OCI-LY7 (cell line): ENCODE measurements at regions of chr2 and their contacts with region 1.

Region 1: DNA sequence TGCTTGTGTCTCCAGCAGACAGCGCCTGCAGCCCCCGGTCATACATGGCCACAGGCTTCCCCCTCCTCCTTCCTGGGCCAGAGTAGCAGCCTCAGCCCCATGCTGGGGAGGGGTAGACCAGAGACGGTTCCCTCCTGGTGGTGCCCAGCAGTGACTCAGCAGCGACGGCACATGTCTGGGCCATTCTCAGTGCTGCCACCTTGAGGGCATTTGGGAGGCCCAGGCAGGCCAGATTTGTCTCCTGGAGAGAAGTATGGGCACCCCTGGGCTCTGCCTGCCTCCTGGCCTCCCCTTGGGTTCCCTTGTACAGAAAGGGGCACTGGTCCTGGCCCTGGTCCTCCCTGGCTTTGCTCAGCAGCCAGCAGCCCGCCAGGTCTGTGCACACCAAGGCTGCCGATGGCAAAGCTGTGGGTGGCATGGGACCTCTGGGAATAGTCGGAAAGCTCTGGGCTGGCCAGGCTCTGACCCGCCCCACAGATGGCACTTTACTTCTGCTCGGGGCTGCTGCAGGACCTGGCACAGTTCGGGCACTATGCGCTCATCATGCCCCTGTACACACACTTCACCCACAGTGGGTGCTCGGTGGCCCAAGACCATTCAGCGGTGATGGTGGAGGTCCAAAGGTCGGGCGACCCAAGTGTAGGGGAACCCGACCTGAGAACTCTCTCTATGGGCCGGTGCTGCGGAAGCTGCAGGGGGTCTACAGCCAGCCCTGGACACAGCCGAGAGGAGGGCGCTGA is 11.4 kb upstream of the ALPI start:
- DNase-seq: peak; percentile 78
- H3K4me3 ChIP-seq: no peak overlapping the region
- H3K27ac ChIP-seq: no peak overlapping the region
- H3K4me1 ChIP-seq: peaks cover 4% of the 10 kb centered on the region
- CTCF ChIP-seq: peak; percentile 80

Region 2: DNA sequence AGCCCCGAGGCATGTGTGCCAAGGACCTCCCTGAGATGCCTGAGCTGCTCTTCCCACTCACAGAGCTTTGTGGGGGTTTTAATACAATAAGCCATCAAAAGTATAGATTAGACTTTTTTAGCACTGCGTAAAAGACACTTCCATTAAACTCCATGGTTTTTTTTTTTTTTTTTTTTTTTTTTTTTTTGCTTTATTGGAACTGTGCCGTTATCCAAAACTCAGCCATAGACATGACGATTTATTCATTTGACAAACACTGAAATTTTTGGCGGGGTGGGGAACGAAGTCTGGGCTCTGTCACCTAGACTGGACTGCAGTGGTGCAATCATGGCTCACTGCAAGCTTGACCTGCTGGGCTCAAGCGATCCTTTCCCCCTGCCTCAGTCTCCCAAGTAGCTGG is 536.8 kb before region 1 on chr2:
- CTCF ChIA-PET with region 1: no interaction called
- POLR2A ChIA-PET with region 1: no interaction called
- intact Hi-C with region 1: loop called (anchors 2 kb)
- DNase-seq: no peak
- H3K4me3 ChIP-seq: no peak overlapping the region
- H3K27ac ChIP-seq: no peak overlapping the region
- H3K4me1 ChIP-seq: no peaks in the 10 kb centered on the region
- CTCF ChIP-seq: no peak

Region 3: DNA sequence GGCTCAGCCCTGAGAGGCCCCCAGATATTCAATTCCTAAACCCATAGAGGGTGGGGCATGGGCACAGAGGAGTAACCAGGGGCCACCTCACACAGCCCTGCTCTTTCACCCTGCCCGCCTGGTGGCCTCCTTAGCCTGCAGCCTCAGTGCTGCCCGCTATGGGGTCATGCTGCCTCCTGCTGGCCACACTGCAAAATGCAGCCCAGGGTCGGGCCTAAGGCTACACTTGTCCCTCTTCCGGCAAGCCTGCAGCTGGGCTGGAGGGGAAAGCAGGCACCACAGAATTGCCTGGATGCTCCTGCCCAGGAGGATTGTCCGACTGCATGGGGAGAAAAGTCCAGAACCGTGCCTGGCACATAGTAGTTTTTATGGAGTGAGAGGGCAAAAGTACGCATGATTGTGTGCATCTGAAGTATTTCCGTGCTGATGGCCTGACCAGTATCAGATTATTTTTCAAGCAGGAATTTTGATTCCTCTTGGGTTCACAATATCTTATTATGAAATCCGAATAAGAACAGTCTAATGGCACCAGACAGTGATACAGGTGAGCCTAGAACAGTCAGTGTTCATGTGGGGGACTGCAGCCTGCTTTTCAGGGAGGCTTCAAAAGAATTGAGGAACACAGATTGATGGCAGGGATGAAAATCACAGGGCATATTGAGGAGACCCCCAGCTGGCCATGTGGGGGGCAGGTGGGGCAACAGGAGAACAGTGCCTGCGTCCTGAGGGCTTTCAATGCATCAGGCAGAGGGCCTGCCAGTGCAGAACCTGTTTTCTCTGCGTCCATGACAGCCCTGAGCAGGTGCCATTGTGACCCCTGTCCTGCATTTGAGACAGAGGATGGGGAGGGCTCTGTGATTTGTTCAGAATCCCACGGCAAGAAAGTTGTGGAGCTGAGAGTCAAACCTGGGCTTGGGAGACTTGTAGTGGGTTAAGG is 117.2 kb before region 1 on chr2:
- CTCF ChIA-PET with region 1: no interaction called
- POLR2A ChIA-PET with region 1: no interaction called
- intact Hi-C with region 1: loop called (anchors 2 kb)
- DNase-seq: peak; percentile 67
- H3K4me3 ChIP-seq: no peak overlapping the region
- H3K27ac ChIP-seq: no peak overlapping the region
- H3K4me1 ChIP-seq: peaks cover 14% of the 10 kb centered on the region
- CTCF ChIP-seq: peak; percentile 78

Region 4: GRCh38 chr2:232336241-232337025 is 108.1 kb before region 1 on chr2:
- CTCF ChIA-PET with region 1: no interaction called
- POLR2A ChIA-PET with region 1: no interaction called
- intact Hi-C with region 1: loop called (anchors 2 kb)
- DNase-seq: no peak
- H3K4me3 ChIP-seq: no peak overlapping the region
- H3K27ac ChIP-seq: no peak overlapping the region
- H3K4me1 ChIP-seq: no peaks in the 10 kb centered on the region
- CTCF ChIP-seq: no peak

Region 5: DNA sequence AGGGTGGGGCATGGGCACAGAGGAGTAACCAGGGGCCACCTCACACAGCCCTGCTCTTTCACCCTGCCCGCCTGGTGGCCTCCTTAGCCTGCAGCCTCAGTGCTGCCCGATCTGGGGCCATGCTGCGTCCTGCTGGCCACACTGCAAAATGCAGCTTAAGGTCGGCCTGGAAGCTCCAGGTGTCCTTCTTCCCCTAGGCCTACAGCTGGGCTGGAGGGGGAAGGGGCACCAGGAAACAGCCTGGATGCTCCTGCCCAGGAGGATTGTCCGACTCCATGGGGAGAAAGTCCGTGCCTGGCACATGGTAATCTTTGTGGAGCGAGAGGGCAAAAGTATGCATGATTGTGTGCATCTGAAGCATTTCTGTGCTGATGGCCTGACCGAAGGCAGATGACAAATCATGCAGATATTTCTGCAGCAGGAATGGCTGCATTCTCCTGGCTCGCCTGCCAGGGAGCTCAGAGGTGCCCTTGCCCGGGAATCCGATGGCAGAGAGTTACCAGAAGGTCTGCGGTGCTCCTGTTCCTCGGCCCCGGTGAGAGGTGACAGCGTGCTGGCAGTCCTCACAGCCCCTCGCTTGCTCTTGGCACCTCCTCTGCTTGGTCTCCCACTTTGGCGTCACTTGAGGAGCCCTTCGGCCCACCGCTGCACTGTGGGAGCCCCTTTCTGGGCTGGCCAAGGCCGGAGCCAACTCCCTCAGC is 78.8 kb before region 1 on chr2:
- CTCF ChIA-PET with region 1: no interaction called
- POLR2A ChIA-PET with region 1: interaction called, 3 read pairs
- intact Hi-C with region 1: loop called (anchors 2 kb)
- DNase-seq: peak; percentile 21
- H3K4me3 ChIP-seq: no peak overlapping the region
- H3K27ac ChIP-seq: no peak overlapping the region
- H3K4me1 ChIP-seq: peaks cover 23% of the 10 kb centered on the region
- CTCF ChIP-seq: peak; percentile 33; the same call in 1 of the 2 replicates

Region 6: DNA sequence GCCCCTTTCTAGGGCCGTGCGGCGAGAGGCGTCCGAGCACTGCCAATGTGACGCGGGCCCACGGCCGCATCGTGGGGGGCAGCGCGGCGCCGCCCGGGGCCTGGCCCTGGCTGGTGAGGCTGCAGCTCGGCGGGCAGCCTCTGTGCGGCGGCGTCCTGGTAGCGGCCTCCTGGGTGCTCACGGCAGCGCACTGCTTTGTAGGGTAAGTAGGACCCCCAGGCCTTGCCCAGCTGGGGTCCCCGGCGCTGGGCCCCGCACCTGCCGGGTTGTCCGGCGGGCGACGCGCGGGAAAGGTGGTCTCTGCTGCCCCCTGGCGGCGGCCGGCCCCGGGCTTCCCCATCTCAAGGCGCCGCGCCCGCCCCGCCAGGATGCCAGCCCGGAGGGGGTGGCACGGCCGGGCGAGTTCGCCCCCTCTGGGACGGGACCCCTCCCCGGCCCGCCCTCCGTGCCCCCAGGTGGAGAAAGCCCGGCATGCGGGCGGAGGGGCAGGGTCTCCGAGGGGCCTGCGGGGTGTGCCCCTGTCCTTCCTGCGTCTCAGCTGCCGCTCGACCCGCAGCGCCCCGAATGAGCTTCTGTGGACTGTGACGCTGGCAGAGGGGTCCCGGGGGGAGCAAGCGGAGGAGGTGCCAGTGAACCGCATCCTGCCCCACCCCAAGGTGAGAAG is 77.5 kb after region 1 on chr2:
- CTCF ChIA-PET with region 1: no interaction called
- POLR2A ChIA-PET with region 1: no interaction called
- intact Hi-C with region 1: loop called (anchors 1 kb)
- DNase-seq: peak; percentile 50
- H3K4me3 ChIP-seq: no peak overlapping the region
- H3K27ac ChIP-seq: no peak overlapping the region
- H3K4me1 ChIP-seq: no peaks in the 10 kb centered on the region
- CTCF ChIP-seq: peak; percentile 80